CD8-positive, alpha-beta T cell (primary cell): ENCODE measurements at regions of chr3 and their contacts with region 1.

Region 1: DNA sequence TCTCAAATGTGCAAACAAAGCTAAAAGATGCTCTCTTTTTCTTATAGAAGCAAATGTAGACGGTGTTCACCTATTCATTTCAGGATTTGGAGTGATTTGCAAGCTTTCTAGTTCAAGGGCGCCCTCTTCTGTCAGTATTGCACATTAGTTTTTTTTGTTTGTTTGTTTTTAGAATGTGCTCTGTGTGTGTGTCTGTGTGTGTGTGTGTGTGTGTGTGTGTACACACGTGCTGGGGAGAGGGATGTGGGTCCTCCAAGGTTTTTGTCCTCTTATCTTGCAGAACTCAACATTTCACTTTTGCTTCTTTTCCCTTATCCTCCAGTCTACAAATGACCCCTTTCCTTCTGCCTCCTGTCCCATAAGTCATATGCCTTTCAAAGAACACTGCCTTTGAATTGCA is 23.5 kb downstream of the DNAH1 start:
- DNase-seq: peak in 8 of 9 experiments; percentile 16 to 85 (median 54)
- ATAC-seq: peak; percentile 90
- H3K4me3 ChIP-seq: no peak overlapping the region
- H3K4me3 Mint-ChIP-seq: no peak overlapping the region
- H3K27ac ChIP-seq: no peak overlapping the region
- H3K27ac Mint-ChIP-seq: no peak overlapping the region
- H3K4me1 ChIP-seq: no peaks in the 10 kb centered on the region
- H3K4me1 Mint-ChIP-seq: peaks cover 5% of the 10 kb centered on the region
- H3K27me3 ChIP-seq: no peaks in the 10 kb centered on the region
- H3K27me3 Mint-ChIP-seq: no peaks in the 10 kb centered on the region
- CTCF ChIP-seq: peak; percentile 93

Region 2: DNA sequence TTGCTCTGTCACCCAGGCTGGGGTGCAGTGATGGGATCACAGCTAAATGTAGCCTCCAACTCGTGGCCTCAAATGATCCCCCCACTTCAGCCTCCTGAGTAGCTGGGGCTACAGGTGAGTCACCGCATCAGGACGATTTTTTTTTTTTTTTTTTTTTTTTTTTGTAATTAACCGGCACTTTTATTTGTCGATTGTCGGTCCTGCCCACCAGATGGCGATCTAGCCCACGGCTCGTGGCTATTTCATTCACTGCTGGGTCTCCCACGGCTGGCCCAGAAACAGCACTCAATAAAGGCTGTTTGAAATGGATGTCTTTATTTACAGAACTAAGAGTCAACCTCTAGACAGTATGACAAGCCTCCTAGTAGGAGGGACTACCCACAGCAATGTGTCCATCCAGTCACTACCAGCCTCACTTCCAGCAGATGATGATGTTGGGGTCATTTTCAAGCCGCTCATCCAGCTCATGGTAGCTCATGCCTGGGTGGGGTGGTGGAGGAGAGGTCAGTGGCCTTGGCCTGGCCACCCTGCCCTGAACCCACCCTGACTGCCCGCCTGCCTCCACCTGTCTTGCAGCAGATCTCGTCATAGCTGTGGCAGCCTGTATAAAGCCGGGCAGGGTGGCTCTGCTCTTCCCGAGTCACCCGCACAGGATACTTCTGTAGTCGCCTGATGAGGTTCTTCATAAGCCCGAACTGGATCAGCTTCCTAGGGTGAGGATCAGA is 1992.3 kb before region 1 on chr3:
- CTCF ChIA-PET with region 1: no interaction called
- POLR2A ChIA-PET with region 1: no interaction called
- intact Hi-C with region 1: no loop called
- DNase-seq: peak; percentile 52 to 90 (median 77)
- ATAC-seq: peak; percentile 10
- H3K4me3 ChIP-seq: no peak overlapping the region
- H3K4me3 Mint-ChIP-seq: no peak overlapping the region
- H3K27ac ChIP-seq: peak overlapping the region in 1 of 2 experiments; percentile 32
- H3K27ac Mint-ChIP-seq: peak overlapping the region; percentile 78
- H3K4me1 ChIP-seq: peaks cover 67% of the 10 kb centered on the region
- H3K4me1 Mint-ChIP-seq: peaks cover 71% of the 10 kb centered on the region
- H3K27me3 ChIP-seq: no peaks in the 10 kb centered on the region
- H3K27me3 Mint-ChIP-seq: no peaks in the 10 kb centered on the region
- CTCF ChIP-seq: peak; percentile 53

Region 3: DNA sequence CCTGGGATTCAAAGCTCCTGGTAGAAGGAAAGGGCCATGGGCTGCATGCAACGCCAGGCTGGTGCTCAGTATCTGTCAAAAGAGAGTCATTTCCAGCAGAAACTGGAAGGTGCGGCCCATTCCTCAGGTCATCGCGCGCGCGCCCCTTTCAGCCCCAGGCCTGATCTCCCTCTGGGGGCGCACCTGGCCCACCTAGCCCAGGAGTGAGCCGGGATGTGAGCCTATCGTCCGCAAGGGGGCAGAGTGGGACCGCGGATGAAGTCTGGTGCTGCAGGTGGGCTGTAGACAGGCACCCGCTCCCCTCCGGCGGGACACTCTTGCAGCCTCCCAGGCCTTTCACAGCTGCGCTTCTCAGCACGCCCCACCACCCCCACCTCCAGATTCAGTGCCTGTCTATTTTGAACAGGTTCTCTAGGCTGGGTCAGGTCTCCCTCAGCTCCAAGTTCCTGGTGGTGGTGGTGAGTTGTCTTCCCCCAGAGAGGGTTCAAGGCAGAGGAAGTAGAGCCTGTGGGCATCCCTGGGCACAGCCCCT is 338.1 kb before region 1 on chr3:
- CTCF ChIA-PET with region 1: interaction called, 14 read pairs
- POLR2A ChIA-PET with region 1: interaction called, 3 read pairs
- intact Hi-C with region 1: loop called in 1 of 2 experiments (anchors 1 kb)
- DNase-seq: peak; percentile 77 to 94 (median 89)
- ATAC-seq: peak; percentile 99
- H3K4me3 ChIP-seq: no peak overlapping the region
- H3K4me3 Mint-ChIP-seq: no peak overlapping the region
- H3K27ac ChIP-seq: no peak overlapping the region
- H3K27ac Mint-ChIP-seq: no peak overlapping the region
- H3K4me1 ChIP-seq: peaks cover 13% of the 10 kb centered on the region
- H3K4me1 Mint-ChIP-seq: peaks cover 14% of the 10 kb centered on the region
- H3K27me3 ChIP-seq: no peaks in the 10 kb centered on the region
- H3K27me3 Mint-ChIP-seq: no peaks in the 10 kb centered on the region
- CTCF ChIP-seq: peak; percentile 87

Region 4: DNA sequence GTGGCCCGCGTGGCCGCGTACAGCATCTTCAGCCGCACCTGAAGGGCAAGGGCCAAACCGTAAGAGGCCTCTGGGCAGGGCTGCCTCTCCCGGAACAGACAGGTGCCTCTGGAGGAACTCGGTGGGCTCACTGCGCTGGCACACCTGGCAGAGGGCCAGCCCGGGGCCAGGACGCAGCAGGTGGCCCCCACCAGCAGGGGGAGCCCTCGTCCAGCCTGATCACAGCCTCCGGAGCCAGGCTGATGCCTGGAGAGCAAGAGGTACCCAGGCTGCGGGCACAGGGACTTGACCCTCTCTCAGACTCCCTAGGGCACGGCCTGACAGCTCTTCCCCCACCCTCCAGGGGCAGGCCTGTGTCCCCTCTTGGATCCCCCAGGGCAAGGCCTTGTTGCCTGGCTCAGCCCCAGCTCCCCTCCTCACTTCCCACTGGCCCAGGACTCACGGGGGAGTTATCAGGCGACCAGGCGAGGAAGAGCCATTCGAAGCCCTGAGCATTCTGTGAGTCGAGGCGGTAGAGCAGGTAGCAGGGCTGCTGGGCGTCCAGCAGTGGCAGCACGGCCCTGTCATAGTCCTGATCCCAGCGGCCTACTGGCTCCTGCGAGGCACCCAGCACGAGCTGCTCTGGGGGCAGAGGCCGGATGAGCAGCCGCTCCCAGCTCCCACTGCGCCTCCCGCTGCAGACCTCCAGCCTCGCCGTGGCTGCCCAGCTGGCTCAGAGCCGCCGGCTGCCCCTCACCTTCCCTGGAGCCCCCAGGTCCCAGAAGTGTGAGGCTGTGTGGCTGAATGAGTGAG is 107.9 kb before region 1 on chr3:
- CTCF ChIA-PET with region 1: interaction called, 241 read pairs
- POLR2A ChIA-PET with region 1: interaction called, 6 read pairs
- intact Hi-C with region 1: loop called (anchors 1 kb)
- DNase-seq: peak; percentile 79 to 97 (median 89)
- ATAC-seq: peak; percentile 87
- H3K4me3 ChIP-seq: no peak overlapping the region
- H3K4me3 Mint-ChIP-seq: peak overlapping the region; percentile 42
- H3K27ac ChIP-seq: peak overlapping the region in 1 of 2 experiments; percentile 17
- H3K27ac Mint-ChIP-seq: peak overlapping the region; percentile 90
- H3K4me1 ChIP-seq: peaks cover 61% of the 10 kb centered on the region
- H3K4me1 Mint-ChIP-seq: peaks cover 64% of the 10 kb centered on the region
- H3K27me3 ChIP-seq: no peaks in the 10 kb centered on the region
- H3K27me3 Mint-ChIP-seq: no peaks in the 10 kb centered on the region
- CTCF ChIP-seq: peak; percentile 92

Region 5: DNA sequence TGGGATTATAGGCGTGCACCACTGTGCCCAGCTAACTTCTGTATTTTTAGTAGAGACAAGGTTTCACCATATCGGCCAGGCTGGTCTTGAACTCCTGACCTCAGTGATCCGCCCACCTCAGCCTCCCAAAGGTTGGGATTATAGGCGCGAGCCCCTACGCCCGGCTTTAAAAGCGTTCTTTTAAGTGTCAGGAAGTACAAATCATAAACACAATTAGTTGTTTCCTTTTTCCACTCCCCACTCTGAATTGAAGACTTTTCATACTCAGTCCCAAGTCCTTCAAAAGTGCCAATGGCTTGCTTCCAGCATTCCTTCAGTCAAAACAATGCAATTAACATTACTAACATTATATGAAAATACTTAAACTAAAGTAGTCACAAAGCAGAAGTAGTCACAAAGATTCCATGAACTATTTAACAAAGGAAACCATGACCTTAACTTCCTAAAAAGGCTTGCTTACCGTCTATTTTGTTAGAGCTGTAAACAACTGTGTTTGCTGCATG is 69.3 kb before region 1 on chr3:
- CTCF ChIA-PET with region 1: interaction called, 15 read pairs
- POLR2A ChIA-PET with region 1: no interaction called
- intact Hi-C with region 1: loop called in 1 of 2 experiments (anchors 10 kb)
- DNase-seq: no peak
- ATAC-seq: no peak
- H3K4me3 ChIP-seq: peak overlapping the region in 1 of 2 experiments; percentile 10
- H3K4me3 Mint-ChIP-seq: peak overlapping the region; percentile 82
- H3K27ac ChIP-seq: peak overlapping the region; percentile 34 to 68
- H3K27ac Mint-ChIP-seq: peak overlapping the region; percentile 95
- H3K4me1 ChIP-seq: peaks cover 73% of the 10 kb centered on the region
- H3K4me1 Mint-ChIP-seq: peaks cover 86% of the 10 kb centered on the region
- H3K27me3 ChIP-seq: no peaks in the 10 kb centered on the region
- H3K27me3 Mint-ChIP-seq: no peaks in the 10 kb centered on the region
- CTCF ChIP-seq: no peak

Region 6: GRCh38 chr3:52298149-52299098 is 41.2 kb before region 1 on chr3:
- CTCF ChIA-PET with region 1: interaction called, 99 read pairs
- POLR2A ChIA-PET with region 1: no interaction called
- intact Hi-C with region 1: no loop called
- DNase-seq: peak in 1 of 9 experiments; percentile 6
- ATAC-seq: no peak
- H3K4me3 ChIP-seq: no peak overlapping the region
- H3K4me3 Mint-ChIP-seq: no peak overlapping the region
- H3K27ac ChIP-seq: no peak overlapping the region
- H3K27ac Mint-ChIP-seq: no peak overlapping the region
- H3K4me1 ChIP-seq: no peaks in the 10 kb centered on the region
- H3K4me1 Mint-ChIP-seq: peaks cover 7% of the 10 kb centered on the region
- H3K27me3 ChIP-seq: no peaks in the 10 kb centered on the region
- H3K27me3 Mint-ChIP-seq: no peaks in the 10 kb centered on the region
- CTCF ChIP-seq: no peak

Region 7: GRCh38 chr3:52364324-52365035 is 24.9 kb after region 1 on chr3:
- CTCF ChIA-PET with region 1: interaction called, 12 read pairs
- POLR2A ChIA-PET with region 1: no interaction called
- intact Hi-C with region 1: no loop called
- DNase-seq: no peak
- ATAC-seq: no peak
- H3K4me3 ChIP-seq: no peak overlapping the region
- H3K4me3 Mint-ChIP-seq: no peak overlapping the region
- H3K27ac ChIP-seq: no peak overlapping the region
- H3K27ac Mint-ChIP-seq: no peak overlapping the region
- H3K4me1 ChIP-seq: no peaks in the 10 kb centered on the region
- H3K4me1 Mint-ChIP-seq: no peaks in the 10 kb centered on the region
- H3K27me3 ChIP-seq: no peaks in the 10 kb centered on the region
- H3K27me3 Mint-ChIP-seq: no peaks in the 10 kb centered on the region
- CTCF ChIP-seq: no peak

Region 8: DNA sequence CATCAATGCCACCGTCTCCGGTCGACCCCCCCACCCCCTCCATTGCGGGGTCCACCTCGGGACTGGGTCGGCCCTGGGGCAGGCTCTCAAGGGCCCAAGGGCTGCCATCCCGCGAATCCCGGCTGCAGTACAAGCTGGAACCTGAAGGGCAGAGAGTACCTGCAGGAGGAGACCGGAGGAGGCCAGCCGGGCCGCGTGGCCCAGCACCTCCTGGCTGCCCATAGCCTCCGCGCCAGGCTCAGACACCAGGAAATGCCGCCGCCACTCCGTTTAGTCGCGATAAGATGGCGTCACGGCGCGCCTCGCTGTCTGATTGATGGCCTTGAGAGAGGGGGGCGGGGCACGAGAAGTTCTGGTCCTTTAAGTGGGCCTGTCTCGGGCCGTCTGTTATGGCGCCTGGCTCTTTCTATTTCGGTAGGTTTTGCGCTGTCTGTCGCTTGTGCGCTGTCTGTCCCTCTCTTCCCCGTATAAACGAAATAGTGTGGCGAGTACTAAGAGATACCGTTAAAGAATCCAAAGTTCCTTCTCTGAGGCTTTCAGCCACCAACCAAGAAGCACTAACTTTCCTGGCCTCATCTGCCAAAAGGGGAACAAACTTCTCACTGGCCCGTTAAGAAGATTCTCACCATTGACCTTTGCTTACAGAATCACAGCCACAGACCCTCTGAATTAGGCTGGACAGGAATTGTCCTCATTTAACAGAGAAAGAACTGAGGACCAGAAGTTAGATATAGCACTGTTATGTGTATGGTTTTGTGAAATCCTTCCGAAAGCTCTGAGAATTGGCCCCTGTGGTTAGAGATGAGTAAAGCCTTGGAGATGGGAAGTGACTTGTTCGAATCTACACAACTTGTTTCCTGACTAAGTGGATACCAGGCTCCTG is 790.8 kb after region 1 on chr3 and contains the start of gene RFT1:
- CTCF ChIA-PET with region 1: no interaction called
- POLR2A ChIA-PET with region 1: no interaction called
- intact Hi-C with region 1: no loop called
- DNase-seq: peak; percentile 95 to 99 (median 99)
- ATAC-seq: peak; percentile 92
- H3K4me3 ChIP-seq: peak within 1 kb of the TSS; percentile 90 to 93
- H3K4me3 Mint-ChIP-seq: peak within 1 kb of the TSS; percentile 91
- H3K27ac ChIP-seq: peak within 1 kb of the TSS; percentile 89 to 98
- H3K27ac Mint-ChIP-seq: peak within 1 kb of the TSS; percentile 99
- H3K4me1 ChIP-seq: peaks cover 21% of the 10 kb centered on the region
- H3K4me1 Mint-ChIP-seq: peaks cover 37% of the 10 kb centered on the region
- H3K27me3 ChIP-seq: no peaks in the 10 kb centered on the region
- H3K27me3 Mint-ChIP-seq: no peaks in the 10 kb centered on the region
- CTCF ChIP-seq: no peak
- total RNA-seq, gene RFT1: 6.6 to 7.0 TPM